Activated CD4-positive, alpha-beta memory T cell treated with anti-CD3 and anti-CD28 coated beads for 36 hours (primary cell): ENCODE measurements at regions of chr11 and their contacts with region 1.

Region 1: GRCh38 chr11:18012863-18013781 is at the start of gene SERGEF:
- DNase-seq: peak; percentile 95
- H3K4me3 Mint-ChIP-seq: peak within 1 kb of the TSS; percentile 93
- H3K27ac Mint-ChIP-seq: peak within 1 kb of the TSS; percentile 88
- H3K4me1 Mint-ChIP-seq: peaks cover 40% of the 10 kb centered on the region
- H3K27me3 Mint-ChIP-seq: no peaks in the 10 kb centered on the region
- total RNA-seq, gene SERGEF: 42.7 to 44.2 TPM

Region 2: DNA sequence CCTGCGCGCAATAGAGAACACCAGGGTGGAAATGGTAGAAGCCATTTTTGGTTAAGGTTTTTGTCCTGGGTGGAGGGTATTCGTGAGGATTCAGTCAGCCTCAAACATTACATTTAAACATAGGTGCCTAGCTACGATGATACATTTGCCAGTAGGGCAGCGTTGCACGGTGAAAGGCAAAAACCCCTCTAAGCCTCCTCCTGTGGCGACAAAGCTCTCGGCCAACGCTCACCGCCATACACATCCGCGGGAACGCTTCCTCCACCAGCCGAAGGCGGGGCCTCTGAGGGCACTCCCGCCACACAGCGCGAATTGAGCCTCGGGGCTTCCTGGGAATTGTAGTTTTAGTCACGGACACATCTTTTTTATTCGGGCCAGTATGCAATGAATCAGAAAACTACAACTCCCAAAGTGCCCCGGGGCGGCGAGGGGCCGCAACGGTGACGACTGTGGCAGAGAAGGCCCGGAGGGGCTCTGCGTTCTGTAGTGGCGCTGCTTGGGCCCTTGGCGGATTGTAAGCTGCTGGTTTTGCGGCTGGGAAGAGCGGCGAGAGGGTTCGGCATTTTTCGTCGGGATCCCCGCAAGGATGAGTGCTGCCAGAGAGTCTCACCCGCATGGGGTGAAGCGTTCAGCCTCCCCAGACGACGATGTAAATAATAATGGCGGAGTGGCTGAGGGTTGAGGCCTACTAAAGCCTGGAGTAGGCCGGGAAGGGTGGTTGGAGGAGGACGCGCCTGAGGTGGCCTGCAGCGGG is 1274.8 kb before region 1 on chr11 and contains the start of gene C11orf58:
- CTCF ChIA-PET with region 1: no interaction called
- POLR2A ChIA-PET with region 1: no interaction called
- intact Hi-C with region 1: loop called (anchors 5 kb)
- DNase-seq: peak; percentile 97
- H3K4me3 Mint-ChIP-seq: no peak within 1 kb of the TSS
- H3K27ac Mint-ChIP-seq: no peak within 1 kb of the TSS
- H3K4me1 Mint-ChIP-seq: peaks cover 22% of the 10 kb centered on the region
- H3K27me3 Mint-ChIP-seq: no peaks in the 10 kb centered on the region
- total RNA-seq, gene C11orf58: 132 to 134 TPM

Region 3: GRCh38 chr11:17906436-17906835 is 106.7 kb before region 1 on chr11:
- CTCF ChIA-PET with region 1: no interaction called
- POLR2A ChIA-PET with region 1: no interaction called
- intact Hi-C with region 1: no loop called
- DNase-seq: peak; percentile 13
- H3K4me3 Mint-ChIP-seq: no peak overlapping the region
- H3K27ac Mint-ChIP-seq: no peak overlapping the region
- H3K4me1 Mint-ChIP-seq: no peaks in the 10 kb centered on the region
- H3K27me3 Mint-ChIP-seq: no peaks in the 10 kb centered on the region

Region 4: GRCh38 chr11:17991783-17992433 is 21.2 kb before region 1 on chr11:
- CTCF ChIA-PET with region 1: no interaction called
- POLR2A ChIA-PET with region 1: interaction called, 4 read pairs
- intact Hi-C with region 1: loop called (anchors 2 kb)
- DNase-seq: peak; percentile 57
- H3K4me3 Mint-ChIP-seq: no peak overlapping the region
- H3K27ac Mint-ChIP-seq: no peak overlapping the region
- H3K4me1 Mint-ChIP-seq: peaks cover 2% of the 10 kb centered on the region
- H3K27me3 Mint-ChIP-seq: no peaks in the 10 kb centered on the region

Region 5: DNA sequence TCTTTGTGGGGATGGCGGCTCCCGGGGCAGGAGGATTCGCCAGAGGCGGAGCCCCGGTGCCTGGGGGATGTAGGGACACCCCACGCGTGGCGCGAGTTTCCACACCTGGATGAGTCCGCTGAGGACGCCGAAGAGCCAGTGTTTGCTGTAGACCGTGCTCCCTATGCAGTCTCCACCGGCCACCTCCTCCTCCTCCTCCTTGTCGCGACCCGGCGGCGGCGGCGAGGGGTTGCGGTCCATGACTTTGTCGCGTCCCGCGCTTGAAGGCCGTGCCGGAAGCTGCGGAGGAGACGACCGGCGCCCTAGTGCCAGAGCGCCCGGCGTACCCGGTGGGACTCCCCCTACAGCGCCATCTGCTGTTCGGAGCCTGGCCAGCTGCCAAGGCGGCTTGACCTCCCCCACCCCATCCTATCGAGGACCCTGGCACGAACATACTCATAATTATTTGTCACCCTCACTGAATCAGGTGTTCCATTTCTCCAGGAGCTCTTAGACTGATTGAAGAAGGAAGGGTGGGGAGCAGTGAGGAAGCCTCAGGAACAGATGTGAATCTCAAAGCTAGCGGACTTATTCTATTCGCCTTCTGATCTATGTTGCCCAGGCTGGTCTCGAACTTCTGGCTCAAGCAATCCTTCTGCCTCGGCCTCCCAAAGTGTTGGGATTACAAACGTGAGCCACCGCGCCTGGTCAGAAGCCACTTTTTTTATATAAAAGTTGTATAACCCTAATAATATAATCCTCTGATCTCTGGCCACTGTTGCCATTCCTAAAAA is 92.9 kb after region 1 on chr11 and contains the start of gene SAAL1:
- CTCF ChIA-PET with region 1: interaction called, 23 read pairs
- POLR2A ChIA-PET with region 1: interaction called, 19 read pairs
- intact Hi-C with region 1: loop called (anchors 1 kb)
- DNase-seq: peak; percentile 94
- H3K4me3 Mint-ChIP-seq: peak within 1 kb of the TSS; percentile 92
- H3K27ac Mint-ChIP-seq: peak within 1 kb of the TSS; percentile 78
- H3K4me1 Mint-ChIP-seq: peaks cover 37% of the 10 kb centered on the region
- H3K27me3 Mint-ChIP-seq: peaks cover 4% of the 10 kb centered on the region
- total RNA-seq, gene SAAL1: 32.1 to 34.3 TPM

Region 6: GRCh38 chr11:18115360-18116127 is 102.4 kb after region 1 on chr11:
- CTCF ChIA-PET with region 1: interaction called, 10 read pairs
- POLR2A ChIA-PET with region 1: no interaction called
- intact Hi-C with region 1: no loop called
- DNase-seq: peak; percentile 70
- H3K4me3 Mint-ChIP-seq: no peak overlapping the region
- H3K27ac Mint-ChIP-seq: no peak overlapping the region
- H3K4me1 Mint-ChIP-seq: no peaks in the 10 kb centered on the region
- H3K27me3 Mint-ChIP-seq: peaks cover 10% of the 10 kb centered on the region

Region 7: GRCh38 chr11:18383388-18384156 is 370.4 kb after region 1 on chr11:
- CTCF ChIA-PET with region 1: no interaction called
- POLR2A ChIA-PET with region 1: no interaction called
- intact Hi-C with region 1: loop called (anchors 5 kb)
- DNase-seq: peak; percentile 92
- H3K4me3 Mint-ChIP-seq: peak overlapping the region; percentile 59
- H3K27ac Mint-ChIP-seq: peak overlapping the region; percentile 99
- H3K4me1 Mint-ChIP-seq: peaks cover 43% of the 10 kb centered on the region
- H3K27me3 Mint-ChIP-seq: no peaks in the 10 kb centered on the region